ENCODE measurements at regions of chr10 and their contacts with region 1.

Region 1: DNA sequence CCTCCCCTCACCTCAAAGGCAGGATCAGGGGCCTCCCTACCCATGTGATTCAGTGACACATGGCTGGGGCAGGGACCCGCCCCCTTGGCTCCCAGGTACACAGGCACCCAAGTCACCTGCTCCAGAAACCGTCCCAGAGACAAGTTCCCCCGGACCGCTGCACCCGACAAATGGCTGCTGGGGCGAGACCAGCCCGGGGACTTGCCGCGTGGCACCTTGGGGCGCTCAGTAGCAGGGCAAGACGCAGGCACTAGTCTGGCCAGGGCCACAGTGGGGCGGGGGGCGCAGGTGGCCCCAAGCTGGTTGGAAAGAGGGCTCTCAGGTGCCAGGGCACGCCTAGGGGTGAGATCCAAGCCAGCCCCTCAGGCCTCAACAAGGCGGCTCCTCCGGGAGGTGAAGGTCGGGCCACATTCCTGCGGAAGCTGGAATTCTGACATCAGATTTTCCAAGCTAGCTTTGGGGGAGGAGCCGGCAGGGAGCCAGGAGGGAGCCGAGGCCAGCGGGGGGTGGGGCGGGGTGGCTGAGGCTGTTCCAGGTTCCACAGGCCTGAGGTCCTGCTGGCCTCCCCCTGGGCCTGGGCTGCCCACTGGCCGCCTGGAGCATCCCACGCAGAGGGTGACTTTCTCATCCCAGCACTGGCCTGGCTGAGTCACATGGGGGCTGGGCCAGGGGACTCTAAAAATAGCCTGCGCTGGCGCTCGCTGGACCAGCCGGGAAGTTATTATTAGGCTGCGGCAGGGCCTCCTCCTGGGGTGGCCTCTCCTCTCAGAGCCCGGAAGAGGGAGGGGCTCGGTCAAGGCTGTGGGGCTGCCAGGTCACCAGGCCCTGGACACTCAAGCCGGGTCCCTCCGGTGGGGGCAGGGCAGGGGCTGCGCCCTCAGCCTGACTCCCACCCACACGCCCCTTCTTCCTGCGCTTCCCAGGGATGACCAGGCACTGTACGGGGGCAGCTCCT is 20.5 kb upstream of the INPP5A start:
- DNase-seq: peak; percentile 96 to 97
- ATAC-seq: peak; percentile 95
- H3K4me3 ChIP-seq: no peak overlapping the region
- H3K27ac ChIP-seq: peak overlapping the region; percentile 48 to 98
- H3K4me1 ChIP-seq: peaks cover 0 to 3% of the 10 kb centered on the region in 2 donors
- H3K27me3 ChIP-seq: no peaks in the 10 kb centered on the region

Region 2: DNA sequence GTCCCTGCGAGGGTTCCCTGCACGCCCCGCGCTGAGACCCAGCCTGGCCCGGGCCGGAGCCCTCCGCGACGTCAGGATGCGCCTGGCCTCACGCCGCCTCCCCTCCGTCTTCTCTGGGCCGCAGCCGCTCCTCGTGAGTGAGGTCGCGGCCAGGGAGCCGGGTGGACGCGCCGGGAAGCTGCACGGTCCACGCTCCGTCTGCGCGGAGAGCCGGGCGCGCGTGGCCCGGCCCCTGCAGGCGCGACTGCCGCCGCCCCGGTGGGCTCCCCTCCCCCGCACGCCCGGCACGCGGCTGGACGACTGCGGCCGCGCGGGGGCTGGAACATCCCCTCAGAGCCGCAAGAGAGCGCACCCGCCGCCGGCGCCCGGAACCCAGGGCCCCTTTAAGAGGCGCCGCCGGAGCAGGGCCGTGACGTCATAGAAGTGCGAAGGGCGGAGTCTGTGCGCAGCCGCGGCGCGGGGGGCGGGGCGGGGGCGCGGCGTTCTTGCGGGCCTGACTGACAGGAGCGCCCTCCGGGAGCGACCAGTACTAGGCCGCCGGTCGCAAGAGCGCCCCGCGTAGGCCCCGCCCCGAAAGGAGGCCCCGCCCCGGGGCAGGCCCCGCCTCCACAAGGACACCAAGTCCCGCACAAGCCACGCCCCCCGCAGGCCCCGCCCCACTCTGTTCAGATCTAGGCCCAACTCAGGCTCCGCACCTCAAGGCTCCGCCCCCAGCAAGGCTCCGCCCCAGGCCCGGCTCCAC is 20.1 kb after region 1 on chr10:
- intact Hi-C with region 1: loop called (anchors 1 kb)
- DNase-seq: peak; percentile 100
- ATAC-seq: peak; percentile 98
- H3K4me3 ChIP-seq: peak overlapping the region; percentile 20 to 53
- H3K27ac ChIP-seq: peak overlapping the region in 1 of 2 donors; percentile 37
- H3K4me1 ChIP-seq: no peaks in the 10 kb centered on the region
- H3K27me3 ChIP-seq: no peaks in the 10 kb centered on the region

Region 3: DNA sequence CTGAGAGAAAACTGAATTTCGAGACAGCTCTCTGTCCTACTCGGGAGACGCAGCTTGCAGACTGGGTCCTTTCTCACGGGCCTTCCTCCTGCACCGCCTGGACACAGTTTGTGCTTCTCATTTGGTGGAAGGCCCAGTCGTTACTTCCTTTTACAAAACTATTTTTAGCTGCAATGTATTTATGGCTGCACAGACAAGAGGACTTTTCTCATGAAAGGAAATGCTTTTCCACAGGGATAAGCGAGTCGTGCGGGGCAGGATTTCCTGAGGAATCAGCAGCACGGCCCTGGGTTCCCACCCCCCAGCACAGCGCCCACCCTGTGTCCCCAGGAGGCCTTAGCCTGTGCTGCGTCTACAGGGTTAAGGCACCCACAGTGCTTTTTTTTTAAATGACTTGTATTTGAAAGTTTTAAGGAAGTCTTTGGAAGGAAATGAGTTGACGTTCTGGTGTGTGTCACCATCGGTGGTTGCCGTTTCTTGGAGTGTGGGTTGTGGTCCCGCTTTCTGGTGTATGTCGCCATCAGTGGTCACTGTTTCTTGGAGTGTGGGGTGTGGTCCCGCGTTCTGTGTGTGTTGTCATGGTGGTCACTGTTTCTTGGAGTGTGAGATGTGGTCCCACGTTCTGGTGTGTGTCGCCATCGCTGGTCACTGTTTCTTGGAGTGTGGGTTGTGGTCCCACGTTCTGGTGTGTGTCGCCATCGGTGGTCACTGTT is 71.4 kb after region 1 on chr10:
- intact Hi-C with region 1: loop called in 1 of 2 experiments (anchors 5 kb)
- DNase-seq: peak; percentile 68 to 76
- ATAC-seq: no peak
- H3K4me3 ChIP-seq: no peak overlapping the region
- H3K27ac ChIP-seq: peak overlapping the region; percentile 58 to 81
- H3K4me1 ChIP-seq: peaks cover 4 to 8% of the 10 kb centered on the region in 2 donors
- H3K27me3 ChIP-seq: no peaks in the 10 kb centered on the region

Region 4: GRCh38 chr10:132627666-132628531 is 110.9 kb after region 1 on chr10:
- intact Hi-C with region 1: loop called in 1 of 2 experiments (anchors 1 kb)
- DNase-seq: peak; percentile 80 to 85
- ATAC-seq: peak; percentile 33
- H3K4me3 ChIP-seq: no peak overlapping the region
- H3K27ac ChIP-seq: peak overlapping the region; percentile 59 to 79
- H3K4me1 ChIP-seq: peaks cover 0 to 3% of the 10 kb centered on the region in 2 donors
- H3K27me3 ChIP-seq: no peaks in the 10 kb centered on the region